ENCODE measurements at regions of chr11 and their contacts with region 1.

Region 1: GRCh38 chr11:5380740-5381342 is 2.8 kb upstream of the OR51M1 start:
- DNase-seq: peak; percentile 77
- H3K4me3 ChIP-seq: no peak overlapping the region
- H3K27ac ChIP-seq: no peak overlapping the region
- H3K4me1 ChIP-seq: no peaks in the 10 kb centered on the region
- H3K27me3 ChIP-seq: no peaks in the 10 kb centered on the region

Region 2: GRCh38 chr11:4636962-4637661 is 743.7 kb before region 1 on chr11 and contains the start of gene OR51D1:
- in situ Hi-C with region 1: loop called (anchors 25 kb)
- DNase-seq: peak; percentile 72
- H3K4me3 ChIP-seq: 0 out of 2 replicates have a peak within 1 kb of the TSS, but pooled peaks have one; percentile 33
- H3K27ac ChIP-seq: no peak within 1 kb of the TSS
- H3K4me1 ChIP-seq: no peaks in the 10 kb centered on the region
- H3K27me3 ChIP-seq: peaks cover 14% of the 10 kb centered on the region; the same call in 1 of the 2 replicates
- total RNA-seq, gene OR51D1: not detected in 2 replicates

Region 3: GRCh38 chr11:5123802-5124521 is 256.9 kb before region 1 on chr11:
- in situ Hi-C with region 1: loop called (anchors 10 kb)
- DNase-seq: peak; percentile 92
- H3K4me3 ChIP-seq: no peak overlapping the region
- H3K27ac ChIP-seq: no peak overlapping the region
- H3K4me1 ChIP-seq: no peaks in the 10 kb centered on the region
- H3K27me3 ChIP-seq: no peaks in the 10 kb centered on the region